ENCODE measurements at regions of chr3 and their contacts with region 1.

Region 1: DNA sequence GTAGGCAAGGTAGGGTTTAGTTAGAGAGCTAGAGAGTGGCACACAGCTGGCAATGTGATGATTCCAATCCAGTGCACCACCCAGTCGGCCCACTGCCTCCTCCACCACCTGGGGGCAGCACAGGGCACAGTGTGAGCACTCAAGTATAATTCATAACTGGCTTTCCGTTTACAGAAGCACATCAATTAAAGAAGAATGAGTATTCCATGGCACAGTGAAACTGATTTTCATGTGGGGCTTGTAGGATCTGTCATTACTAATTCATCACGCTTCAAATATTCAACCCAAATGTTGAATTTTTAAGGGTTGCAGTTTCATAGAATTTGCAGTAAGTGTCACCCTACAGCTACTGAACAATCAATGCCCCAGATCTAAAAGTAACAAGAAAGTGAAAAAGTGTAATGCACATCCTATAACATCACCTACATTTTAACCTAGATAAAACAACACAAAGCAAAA is 149.9 kb downstream of the IGSF11 start:
- DNase-seq: peak; percentile 89
- H3K4me3 Mint-ChIP-seq: no peak overlapping the region
- H3K27ac Mint-ChIP-seq: no peak overlapping the region
- H3K4me1 Mint-ChIP-seq: no peaks in the 10 kb centered on the region
- H3K27me3 Mint-ChIP-seq: peaks cover 8% of the 10 kb centered on the region

Region 2: DNA sequence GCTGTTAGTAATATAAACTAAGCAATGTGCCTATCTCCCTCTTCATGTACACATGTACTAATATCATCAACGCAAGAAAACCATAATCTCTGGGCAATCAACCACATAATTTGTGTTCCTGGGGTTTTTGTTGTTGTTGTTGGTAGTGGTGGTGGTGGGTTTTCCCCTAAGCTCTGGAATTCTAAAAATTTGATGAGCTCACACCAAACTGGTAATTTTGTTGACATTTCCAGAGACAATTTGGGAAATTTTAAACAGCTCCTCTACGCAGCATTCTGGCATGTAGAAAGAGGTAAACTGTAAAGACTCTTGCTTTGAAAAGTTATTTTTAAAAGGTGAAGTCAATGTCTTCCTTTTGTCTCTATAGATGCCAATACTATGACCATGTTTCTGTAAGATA is 23.1 kb after region 1 on chr3:
- CTCF ChIA-PET with region 1: interaction called, 12 read pairs
- intact Hi-C with region 1: no loop called
- DNase-seq: no peak
- H3K4me3 Mint-ChIP-seq: no peak overlapping the region
- H3K27ac Mint-ChIP-seq: no peak overlapping the region
- H3K4me1 Mint-ChIP-seq: peaks cover 2% of the 10 kb centered on the region
- H3K27me3 Mint-ChIP-seq: no peaks in the 10 kb centered on the region

Region 3: GRCh38 chr3:119018690-119019463 is 134.1 kb after region 1 on chr3:
- CTCF ChIA-PET with region 1: interaction called, 18 read pairs
- intact Hi-C with region 1: no loop called
- DNase-seq: no peak
- H3K4me3 Mint-ChIP-seq: no peak overlapping the region
- H3K27ac Mint-ChIP-seq: no peak overlapping the region
- H3K4me1 Mint-ChIP-seq: peaks cover 10% of the 10 kb centered on the region
- H3K27me3 Mint-ChIP-seq: no peaks in the 10 kb centered on the region

Region 4: DNA sequence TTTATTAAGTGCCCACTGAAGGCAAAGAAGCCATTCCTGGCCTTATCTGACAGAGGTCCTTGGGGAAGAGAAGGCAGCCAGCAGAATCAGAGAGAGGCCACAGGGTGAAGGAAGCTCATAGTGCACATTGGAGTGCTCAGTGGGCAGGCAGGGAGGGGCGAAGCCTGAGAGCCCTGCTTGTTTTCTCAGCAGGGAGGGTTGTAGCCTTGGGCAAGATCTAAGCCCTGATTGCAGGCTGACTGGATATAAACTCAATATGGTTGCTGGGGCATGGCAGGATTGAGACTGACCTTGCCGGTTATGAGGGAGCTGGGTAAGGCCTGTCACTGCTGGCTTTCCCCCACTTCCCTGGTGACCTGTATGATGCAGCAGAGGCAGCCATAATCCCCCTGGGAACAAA is 157.4 kb after region 1 on chr3:
- CTCF ChIA-PET with region 1: interaction called, 309 read pairs
- intact Hi-C with region 1: no loop called
- DNase-seq: no peak
- H3K4me3 Mint-ChIP-seq: no peak overlapping the region
- H3K27ac Mint-ChIP-seq: no peak overlapping the region
- H3K4me1 Mint-ChIP-seq: no peaks in the 10 kb centered on the region
- H3K27me3 Mint-ChIP-seq: peaks cover 14% of the 10 kb centered on the region

Region 5: DNA sequence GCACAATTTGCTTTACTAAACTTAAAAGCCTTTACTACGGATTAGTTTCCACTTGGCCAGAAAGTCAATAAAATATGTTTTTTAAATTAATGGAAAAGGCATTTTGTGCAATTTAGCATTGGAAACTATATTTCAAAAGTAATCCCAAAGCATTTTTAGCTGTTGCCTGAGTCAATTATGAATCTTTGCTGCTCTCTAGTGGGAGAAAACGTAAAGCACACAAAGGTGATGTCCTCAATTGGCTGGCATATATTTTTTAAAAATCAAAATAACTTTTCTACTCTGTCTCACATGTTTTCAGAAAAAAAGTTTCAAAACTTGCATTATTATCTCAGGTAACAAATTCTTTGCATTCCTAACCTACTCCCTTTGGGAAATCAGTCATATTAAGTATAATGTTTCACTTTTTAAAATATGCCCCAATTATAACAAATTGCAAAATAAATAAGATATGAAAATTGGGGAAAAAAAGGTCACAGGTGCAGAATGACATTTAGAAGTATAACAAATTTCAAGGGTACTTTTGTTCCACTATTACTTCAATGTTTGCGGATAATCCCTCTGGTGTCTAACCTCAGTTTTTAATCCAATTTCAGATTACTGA is 213.9 kb after region 1 on chr3:
- CTCF ChIA-PET with region 1: interaction called, 261 read pairs
- intact Hi-C with region 1: loop called (anchors 1 kb)
- DNase-seq: no peak
- H3K4me3 Mint-ChIP-seq: no peak overlapping the region
- H3K27ac Mint-ChIP-seq: no peak overlapping the region
- H3K4me1 Mint-ChIP-seq: no peaks in the 10 kb centered on the region
- H3K27me3 Mint-ChIP-seq: no peaks in the 10 kb centered on the region

Region 6: GRCh38 chr3:119145500-119146191 is 260.9 kb after region 1 on chr3 and contains the start of gene TEX55:
- CTCF ChIA-PET with region 1: interaction called, 5 read pairs
- intact Hi-C with region 1: loop called (anchors 1 kb)
- DNase-seq: peak; percentile 31
- H3K4me3 Mint-ChIP-seq: no peak within 1 kb of the TSS
- H3K27ac Mint-ChIP-seq: no peak within 1 kb of the TSS
- H3K4me1 Mint-ChIP-seq: peaks cover 5% of the 10 kb centered on the region
- H3K27me3 Mint-ChIP-seq: no peaks in the 10 kb centered on the region
- total RNA-seq, gene TEX55: not detected

Region 7: GRCh38 chr3:119559441-119559963 is 674.7 kb after region 1 on chr3 and contains the start of gene CD80:
- CTCF ChIA-PET with region 1: no interaction called
- intact Hi-C with region 1: loop called (anchors 2 kb)
- DNase-seq: peak; percentile 81
- H3K4me3 Mint-ChIP-seq: no peak within 1 kb of the TSS
- H3K27ac Mint-ChIP-seq: no peak within 1 kb of the TSS
- H3K4me1 Mint-ChIP-seq: peaks cover 10% of the 10 kb centered on the region
- H3K27me3 Mint-ChIP-seq: no peaks in the 10 kb centered on the region
- total RNA-seq, gene CD80: 0.14 to 0.40 TPM

Measured in activated naive CD4-positive, alpha-beta T cell treated with anti-CD3 and anti-CD28 coated beads for 36 hours (primary cell).